Breast epithelium (tissue), 4 donors: ENCODE measurements at regions of chr9 and their contacts with region 1.

Region 1: DNA sequence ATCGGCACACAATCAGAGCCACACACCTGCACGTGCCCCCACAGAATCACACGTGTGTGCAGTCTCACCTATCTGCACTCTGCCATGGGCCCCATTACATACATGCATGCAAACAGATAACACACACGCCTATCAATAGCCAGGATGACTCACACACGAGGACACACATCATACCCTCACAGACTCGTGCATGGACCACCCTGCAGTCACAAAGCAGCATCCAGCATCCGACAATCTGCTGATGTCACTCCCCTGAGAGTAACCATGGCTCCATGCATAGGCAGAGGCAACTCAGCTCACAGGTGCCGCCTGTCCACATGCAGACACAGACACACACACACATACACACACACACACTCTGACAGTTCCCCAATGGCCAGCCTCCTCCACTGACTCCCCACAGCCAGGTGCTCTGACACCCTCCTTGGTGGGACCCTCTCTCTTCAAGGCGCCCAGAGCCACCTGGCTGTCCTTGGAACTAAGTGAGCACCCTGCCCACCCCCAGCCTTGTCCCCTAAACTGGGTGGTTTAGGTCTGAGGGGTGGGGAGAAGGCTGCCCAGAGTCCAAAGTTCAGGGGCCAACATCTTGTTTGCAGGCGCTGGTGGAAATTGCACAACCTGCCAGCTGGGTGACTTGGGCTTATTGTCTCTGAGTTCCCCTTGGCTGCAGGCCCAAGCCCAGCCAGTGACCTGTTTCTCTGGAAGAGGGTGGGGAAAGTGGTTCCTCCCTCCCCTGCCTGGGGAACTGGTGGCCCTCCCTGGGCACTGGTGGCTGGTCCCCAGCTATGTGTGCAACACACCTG is 34.6 kb upstream of the NEK6 start:
- DNase-seq: peak; percentile 68 to 75
- H3K4me3 ChIP-seq: no peak overlapping the region
- H3K27ac ChIP-seq: peak overlapping the region in 1 of 2 donors; percentile 45
- H3K4me1 ChIP-seq: no peaks in the 10 kb centered on the region
- H3K27me3 ChIP-seq: no peaks in the 10 kb centered on the region
- CTCF ChIP-seq: no peak
- POLR2A ChIP-seq: no peak

Region 2: GRCh38 chr9:123933401-123933800 is 289.7 kb before region 1 on chr9:
- intact Hi-C with region 1: no loop called
- DNase-seq: no peak
- H3K4me3 ChIP-seq: no peak overlapping the region
- H3K27ac ChIP-seq: no peak overlapping the region
- H3K4me1 ChIP-seq: no peaks in the 10 kb centered on the region
- H3K27me3 ChIP-seq: no peaks in the 10 kb centered on the region
- CTCF ChIP-seq: no peak
- POLR2A ChIP-seq: no peak

Region 3: DNA sequence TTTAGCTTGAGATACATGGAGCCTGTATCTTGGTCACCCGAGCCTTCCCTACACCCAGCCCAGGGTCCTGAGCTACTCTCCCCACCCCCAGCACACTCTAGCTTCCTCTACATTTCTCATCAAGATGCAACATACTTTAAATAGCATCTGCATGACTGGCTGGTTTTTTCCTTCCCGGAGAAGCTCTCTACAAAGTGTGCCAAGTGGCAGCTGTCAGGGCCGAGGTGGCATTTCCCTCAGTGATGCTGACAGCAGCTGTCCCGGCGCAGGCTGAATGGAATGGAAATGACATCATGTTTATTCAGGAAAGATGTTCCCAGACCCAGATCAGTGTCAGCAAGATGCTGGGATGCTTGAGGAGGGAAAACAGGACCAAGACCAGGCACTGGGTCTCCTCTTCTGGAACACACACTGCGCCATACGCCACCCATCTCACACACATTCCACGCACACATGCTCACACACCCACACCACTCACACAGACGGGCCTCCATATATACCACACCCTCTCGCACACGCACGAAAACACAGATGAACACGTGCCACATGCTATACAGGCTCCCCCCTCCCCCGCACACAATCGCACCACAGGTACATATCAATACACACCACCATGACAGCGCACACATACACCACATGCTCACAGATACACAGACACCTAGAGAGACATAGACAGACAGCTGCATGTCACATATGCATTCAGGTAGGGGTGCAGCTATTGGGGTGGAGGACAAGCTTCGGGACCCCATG is 143.8 kb before region 1 on chr9:
- intact Hi-C with region 1: no loop called
- DNase-seq: peak in 1 of 2 donors; percentile 48
- H3K4me3 ChIP-seq: no peak overlapping the region
- H3K27ac ChIP-seq: peak overlapping the region; percentile 77 to 85
- H3K4me1 ChIP-seq: no peaks in the 10 kb centered on the region
- H3K27me3 ChIP-seq: no peaks in the 10 kb centered on the region
- CTCF ChIP-seq: no peak
- POLR2A ChIP-seq: no peak

Region 4: DNA sequence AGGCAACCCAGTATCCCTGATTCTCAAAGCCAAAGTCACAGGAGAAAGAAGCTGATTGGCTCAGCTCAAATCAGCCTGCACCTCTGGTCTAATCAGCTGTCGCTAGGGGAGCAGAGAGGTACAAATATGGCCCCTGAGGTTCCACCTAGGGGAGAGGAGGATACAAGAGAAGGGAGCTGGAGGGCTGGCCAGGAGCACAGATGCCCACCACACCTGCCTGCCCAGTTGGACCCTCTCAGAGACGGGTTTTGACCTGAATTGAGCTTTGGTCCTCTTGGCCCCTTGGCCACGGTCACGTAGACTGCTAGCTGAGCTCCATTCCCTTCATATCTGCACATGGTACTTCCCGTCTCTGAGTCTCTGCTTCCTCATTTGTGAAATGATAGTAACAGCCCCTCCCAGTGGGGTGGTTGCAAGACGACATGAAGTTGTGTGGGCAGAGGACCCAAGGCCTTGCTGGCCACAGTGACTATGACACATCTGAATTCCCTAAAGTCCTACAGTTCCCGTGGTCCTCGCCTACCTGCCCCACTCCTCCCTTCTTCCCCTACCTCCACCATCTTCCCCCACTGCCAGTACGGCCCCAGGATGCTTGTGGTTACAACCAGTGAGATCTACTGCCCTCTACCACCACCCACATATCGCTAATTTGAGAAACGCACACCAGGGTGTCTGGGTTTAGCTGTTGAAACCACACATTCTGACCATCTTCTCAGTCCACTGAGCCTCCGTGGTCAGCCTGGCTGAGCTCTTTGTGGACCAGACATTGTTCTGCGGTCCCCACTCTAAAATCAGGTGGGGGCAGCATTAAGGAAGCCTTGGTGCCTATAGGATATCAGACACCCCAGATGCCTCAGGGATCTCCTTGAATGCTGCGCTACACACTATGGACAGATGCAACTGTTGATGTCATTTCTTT is 25.7 kb before region 1 on chr9:
- intact Hi-C with region 1: loop called (anchors 1 kb)
- DNase-seq: peak in 1 of 2 donors; percentile 46
- H3K4me3 ChIP-seq: no peak overlapping the region
- H3K27ac ChIP-seq: no peak overlapping the region
- H3K4me1 ChIP-seq: no peaks in the 10 kb centered on the region
- H3K27me3 ChIP-seq: no peaks in the 10 kb centered on the region
- CTCF ChIP-seq: no peak
- POLR2A ChIP-seq: no peak

Region 5: GRCh38 chr9:124342776-124343485 is 119.8 kb after region 1 on chr9:
- intact Hi-C with region 1: no loop called
- DNase-seq: peak in 1 of 2 donors; percentile 44
- H3K4me3 ChIP-seq: peak overlapping the region; percentile 10 to 46 (median 16)
- H3K27ac ChIP-seq: peak overlapping the region; percentile 55 to 79
- H3K4me1 ChIP-seq: no peaks in the 10 kb centered on the region
- H3K27me3 ChIP-seq: no peaks in the 10 kb centered on the region
- CTCF ChIP-seq: no peak
- POLR2A ChIP-seq: no peak